ENCODE measurements at regions of chr3 and their contacts with region 1.

Region 1: DNA sequence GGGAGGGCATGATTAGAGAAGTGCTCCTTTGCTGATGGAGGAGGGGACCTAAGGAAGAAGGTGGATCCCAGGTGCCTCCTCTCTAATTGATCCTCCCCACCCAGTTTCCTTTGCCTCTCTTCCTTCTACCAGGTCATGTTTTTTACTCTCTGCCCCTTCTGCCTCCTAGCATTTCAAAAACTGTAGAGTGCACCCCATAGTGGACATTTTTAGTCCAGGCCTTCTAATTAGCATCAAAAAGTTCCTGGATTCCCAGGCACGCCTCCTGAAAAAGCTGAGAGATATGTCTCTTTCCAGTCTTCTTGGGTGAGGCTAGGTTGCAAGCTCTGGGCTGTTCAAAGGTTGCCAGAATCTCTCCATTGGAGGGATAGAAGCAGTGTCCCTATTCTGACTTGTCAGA is 18.7 kb upstream of the ITGB5 start:
- H3K4me3 ChIP-seq: no peak overlapping the region
- H3K27ac ChIP-seq: no peak overlapping the region
- H3K4me1 ChIP-seq: no peaks in the 10 kb centered on the region
- CTCF ChIP-seq: no peak

Region 2: GRCh38 chr3:124761250-124761796 is 144.5 kb before region 1 on chr3:
- CTCF ChIA-PET with region 1: interaction called, 201 read pairs
- POLR2A ChIA-PET with region 1: interaction called, 5 read pairs
- H3K4me3 ChIP-seq: no peak overlapping the region
- H3K27ac ChIP-seq: no peak overlapping the region
- H3K4me1 ChIP-seq: no peaks in the 10 kb centered on the region
- CTCF ChIP-seq: peak; percentile 75

Region 3: GRCh38 chr3:124768812-124769211 is 137.0 kb before region 1 on chr3:
- CTCF ChIA-PET with region 1: interaction called, 201 read pairs
- POLR2A ChIA-PET with region 1: no interaction called
- H3K4me3 ChIP-seq: no peak overlapping the region
- H3K27ac ChIP-seq: no peak overlapping the region
- H3K4me1 ChIP-seq: 0 out of 2 replicates have a peak, but pooled peaks cover 5% of the 10 kb centered on the region
- CTCF ChIP-seq: no peak

Region 4: GRCh38 chr3:124786441-124787241 is 119.2 kb before region 1 on chr3:
- CTCF ChIA-PET with region 1: interaction called, 26 read pairs
- POLR2A ChIA-PET with region 1: interaction called, 3 read pairs
- H3K4me3 ChIP-seq: no peak overlapping the region
- H3K27ac ChIP-seq: no peak overlapping the region
- H3K4me1 ChIP-seq: no peaks in the 10 kb centered on the region
- CTCF ChIP-seq: no peak

Region 5: DNA sequence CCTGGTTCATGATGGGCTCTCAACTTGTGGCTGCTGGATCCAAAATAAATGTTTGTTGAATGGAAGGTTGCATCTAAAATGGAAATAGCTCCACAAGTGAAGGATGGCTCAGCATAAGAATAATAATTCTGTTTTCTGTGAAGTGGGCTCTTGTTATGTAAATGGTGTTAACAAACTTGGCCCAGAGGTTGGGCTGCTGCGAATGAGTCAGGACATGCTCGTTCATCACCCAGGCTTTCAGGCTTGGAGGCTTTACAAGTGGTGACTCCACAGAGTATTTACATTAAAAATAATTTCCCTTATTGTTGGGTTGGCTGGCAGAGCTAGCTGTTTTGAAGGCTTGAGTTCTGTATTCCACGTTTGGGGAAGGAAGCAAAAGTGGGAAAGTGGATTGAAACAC is 79.1 kb before region 1 on chr3:
- CTCF ChIA-PET with region 1: interaction called, 10 read pairs
- POLR2A ChIA-PET with region 1: no interaction called
- H3K4me3 ChIP-seq: no peak overlapping the region
- H3K27ac ChIP-seq: no peak overlapping the region
- H3K4me1 ChIP-seq: 0 out of 2 replicates have a peak, but pooled peaks cover 2% of the 10 kb centered on the region
- CTCF ChIP-seq: no peak

Region 6: DNA sequence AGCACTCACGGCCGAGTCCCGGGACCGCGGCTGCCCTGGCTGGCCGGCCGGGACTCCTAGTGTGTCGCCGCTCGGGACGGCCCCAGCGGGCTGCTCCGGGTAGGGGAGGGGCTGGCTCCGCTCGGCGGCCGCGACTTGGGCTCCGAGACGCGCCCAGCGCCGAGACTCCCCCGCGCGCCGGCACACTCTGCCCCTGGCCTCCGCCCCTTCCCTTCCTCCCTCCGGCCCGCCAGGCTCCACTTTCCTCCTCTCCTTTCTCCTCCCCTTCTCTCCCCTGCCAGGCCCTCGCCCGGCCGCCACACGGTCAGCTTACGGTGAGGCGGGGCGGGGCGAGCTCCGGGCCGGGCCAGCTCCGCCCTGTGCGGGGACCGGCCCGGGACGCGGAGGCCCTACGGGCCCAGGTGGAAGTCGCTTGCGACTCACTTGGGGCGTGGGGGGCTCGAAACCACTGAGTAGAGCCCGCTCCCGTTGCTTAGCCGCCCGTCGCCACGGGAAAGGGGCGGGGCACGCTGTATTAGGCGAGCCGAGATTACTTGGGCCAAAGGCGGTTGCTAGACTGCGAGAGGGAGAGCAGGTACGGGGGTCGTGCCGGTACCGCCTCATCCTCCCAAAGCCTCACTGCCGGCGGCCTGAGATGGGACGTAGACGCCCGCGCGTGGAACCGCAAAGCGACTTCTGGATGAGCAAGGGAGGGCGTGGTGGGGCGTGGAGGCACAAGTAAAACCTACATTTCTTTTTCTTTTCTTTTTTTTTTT is 18.5 kb before region 1 on chr3 and contains the start of gene ITGB5:
- CTCF ChIA-PET with region 1: interaction called, 25 read pairs
- POLR2A ChIA-PET with region 1: no interaction called
- H3K4me3 ChIP-seq: peak within 1 kb of the TSS; percentile 58
- H3K27ac ChIP-seq: peak within 1 kb of the TSS; percentile 74; the same call in 1 of the 2 replicates
- H3K4me1 ChIP-seq: no peaks in the 10 kb centered on the region
- CTCF ChIP-seq: peak; percentile 27; the same call in 1 of the 2 replicates

Measured in HEK293 (cell line).